ENCODE measurements at regions of chr1 and their contacts with region 1.

Region 1: DNA sequence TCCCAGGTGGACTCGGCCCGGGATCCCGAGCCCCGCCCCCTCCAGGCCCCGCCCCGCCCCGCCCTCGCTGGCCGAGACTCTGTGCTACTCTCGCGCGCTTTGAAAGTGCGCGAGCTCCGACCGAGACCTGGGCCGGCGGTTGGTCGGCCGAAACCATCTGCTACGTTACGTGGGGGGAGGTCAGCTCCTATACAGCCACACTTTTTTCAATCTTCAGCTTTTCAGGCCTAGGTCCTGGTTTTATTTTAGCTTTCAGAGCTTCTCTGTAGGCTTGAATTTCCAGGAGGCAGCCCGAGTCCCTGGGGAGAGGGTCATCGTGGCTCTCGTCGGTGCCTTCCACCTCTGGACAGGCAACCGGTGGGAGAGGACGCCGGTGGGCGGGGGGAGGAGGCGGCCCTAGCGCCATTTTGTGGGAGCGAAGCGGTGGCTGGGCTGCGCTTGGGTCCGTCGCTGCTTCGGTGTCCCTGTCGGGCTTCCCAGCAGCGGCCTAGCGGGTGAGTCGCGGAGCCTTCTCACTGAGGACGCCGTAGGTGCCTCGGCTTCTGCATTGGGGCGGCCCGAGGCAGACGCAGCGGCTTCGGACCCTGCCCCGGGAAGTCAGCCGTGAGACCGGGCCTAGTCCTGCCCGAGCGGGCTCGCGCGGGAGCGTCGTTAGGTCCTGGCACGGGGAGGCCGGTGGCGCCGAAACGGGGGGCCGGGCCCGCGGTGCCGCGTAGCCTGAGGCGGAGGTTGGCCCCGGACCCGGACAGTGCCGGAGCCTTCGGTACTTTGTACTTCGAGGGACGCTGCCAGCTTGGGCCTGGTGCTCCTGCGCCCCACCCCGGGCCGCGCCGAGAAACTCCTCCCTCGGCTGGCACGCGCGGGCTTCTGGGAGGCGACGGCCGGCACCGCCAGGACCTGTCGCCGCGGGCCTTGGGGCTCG is at the start of gene TARDBP:
- DNase-seq: peak; percentile 89
- H3K4me3 Mint-ChIP-seq: peak within 1 kb of the TSS; percentile 94
- H3K27ac Mint-ChIP-seq: peak within 1 kb of the TSS; percentile 98
- H3K4me1 Mint-ChIP-seq: peaks cover 19% of the 10 kb centered on the region
- H3K27me3 Mint-ChIP-seq: no peaks in the 10 kb centered on the region
- total RNA-seq, gene TARDBP: 190 and 202 TPM in 2 replicates

Region 2: GRCh38 chr1:10877894-10878293 is 134.6 kb before region 1 on chr1:
- intact Hi-C with region 1: no loop called
- DNase-seq: no peak
- H3K4me3 Mint-ChIP-seq: no peak overlapping the region
- H3K27ac Mint-ChIP-seq: no peak overlapping the region
- H3K4me1 Mint-ChIP-seq: no peaks in the 10 kb centered on the region
- H3K27me3 Mint-ChIP-seq: peaks cover 8% of the 10 kb centered on the region

Region 3: DNA sequence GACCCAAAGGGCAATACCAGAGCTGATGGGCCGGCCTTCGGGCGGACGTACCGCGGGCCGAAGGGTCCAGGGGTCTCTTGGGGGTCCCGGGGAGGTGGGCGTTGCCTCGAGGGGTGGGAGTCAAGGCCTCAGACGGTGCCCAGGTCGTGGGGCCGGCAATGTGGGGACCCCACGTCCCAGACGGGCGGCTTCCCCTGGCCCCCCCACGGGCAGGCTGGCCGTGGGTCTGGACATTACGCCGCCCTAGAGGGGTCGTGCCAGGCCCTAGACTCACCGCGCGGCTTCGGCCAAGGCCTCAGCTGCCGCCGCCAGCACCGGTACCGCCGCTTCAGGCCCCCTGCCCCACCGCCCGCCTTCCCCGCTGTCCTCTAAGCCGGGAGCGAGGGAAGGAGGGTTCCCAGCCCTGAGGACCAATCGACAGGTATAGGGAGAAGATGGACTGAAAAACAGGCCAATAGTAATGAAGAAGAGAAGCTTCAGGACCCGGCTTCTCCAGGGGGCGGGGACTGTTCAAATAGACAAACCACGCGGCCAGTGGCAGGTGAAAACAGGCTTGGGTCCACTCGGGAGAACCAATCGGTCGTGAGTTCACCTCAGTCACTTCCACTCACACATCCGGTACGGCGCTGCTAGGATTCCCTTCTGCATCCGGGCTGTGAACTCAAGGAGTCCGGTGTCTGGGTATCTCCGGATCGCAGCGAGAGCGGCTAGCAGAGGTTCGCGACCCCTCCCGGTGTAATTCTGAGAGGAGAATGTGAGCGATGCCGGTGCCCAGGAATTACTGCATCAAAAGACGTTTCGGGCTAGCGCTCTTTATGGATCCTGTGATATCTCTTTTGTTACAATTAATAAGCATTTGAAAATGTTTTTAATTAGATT is 249.9 kb after region 1 on chr1 and contains the start of gene MTOR:
- intact Hi-C with region 1: loop called (anchors 2 kb)
- DNase-seq: peak; percentile 98
- H3K4me3 Mint-ChIP-seq: peak within 1 kb of the TSS; percentile 93
- H3K27ac Mint-ChIP-seq: peak within 1 kb of the TSS; percentile 85
- H3K4me1 Mint-ChIP-seq: peaks cover 11% of the 10 kb centered on the region
- H3K27me3 Mint-ChIP-seq: no peaks in the 10 kb centered on the region
- total RNA-seq, gene MTOR: 43.3 and 44.5 TPM in 2 replicates

Measured in activated T-helper 2 cell treated with anti-CD3 and anti-CD28 coated beads, Interferon-gamma antibody, Interleukin-2, Interleukin-4, amounts not matched to agents 10 μg/mL and 5 μg/mL and 100 μg/mL, durations not matched to agents 14 hours and 24 hours and 36 hours (primary cell).